Activated B cell treated with CpG ODN at 0.5 μM for 24 hours (primary cell): ENCODE measurements at regions of chr6 and their contacts with region 1.

Region 1: DNA sequence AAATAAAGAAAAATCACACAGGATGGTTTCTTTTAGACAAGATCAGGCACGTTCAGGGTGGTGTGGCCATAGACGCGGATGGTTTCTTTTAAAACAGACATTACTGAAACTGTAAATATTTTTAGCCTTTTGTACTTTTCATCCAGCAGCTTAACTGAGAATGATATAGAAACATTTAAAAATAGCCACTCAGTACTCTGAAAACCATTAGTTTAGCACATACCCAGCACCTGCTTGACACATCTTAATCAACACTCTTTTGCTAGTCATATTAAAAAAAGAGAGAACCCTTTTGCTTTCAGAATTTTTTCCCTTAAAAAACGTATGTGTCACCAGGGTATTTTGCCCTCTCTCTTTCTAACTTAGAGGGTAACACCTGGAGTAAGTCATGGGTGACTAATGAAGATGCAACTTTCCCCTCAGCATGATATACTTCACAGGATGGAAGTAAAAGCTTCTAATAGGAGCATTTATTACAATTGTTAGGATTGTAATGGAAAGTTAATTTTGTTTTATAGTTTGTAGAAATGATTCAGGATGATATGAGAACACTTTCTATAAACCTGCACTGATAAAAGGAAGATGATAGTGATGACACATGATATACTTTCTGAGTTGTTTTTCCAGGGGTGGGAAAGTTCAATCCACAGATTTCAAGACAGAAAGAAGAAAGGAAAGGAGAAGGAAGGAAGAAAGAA is 45.2 kb downstream of the BACH2 start:
- DNase-seq: no peak
- ATAC-seq: peak; percentile 51
- H3K4me3 Mint-ChIP-seq: peak overlapping the region; percentile 9
- H3K27ac Mint-ChIP-seq: peak overlapping the region; percentile 73
- H3K4me1 Mint-ChIP-seq: peaks cover 73% of the 10 kb centered on the region
- H3K27me3 Mint-ChIP-seq: no peaks in the 10 kb centered on the region
- CTCF ChIP-seq: no peak

Region 2: DNA sequence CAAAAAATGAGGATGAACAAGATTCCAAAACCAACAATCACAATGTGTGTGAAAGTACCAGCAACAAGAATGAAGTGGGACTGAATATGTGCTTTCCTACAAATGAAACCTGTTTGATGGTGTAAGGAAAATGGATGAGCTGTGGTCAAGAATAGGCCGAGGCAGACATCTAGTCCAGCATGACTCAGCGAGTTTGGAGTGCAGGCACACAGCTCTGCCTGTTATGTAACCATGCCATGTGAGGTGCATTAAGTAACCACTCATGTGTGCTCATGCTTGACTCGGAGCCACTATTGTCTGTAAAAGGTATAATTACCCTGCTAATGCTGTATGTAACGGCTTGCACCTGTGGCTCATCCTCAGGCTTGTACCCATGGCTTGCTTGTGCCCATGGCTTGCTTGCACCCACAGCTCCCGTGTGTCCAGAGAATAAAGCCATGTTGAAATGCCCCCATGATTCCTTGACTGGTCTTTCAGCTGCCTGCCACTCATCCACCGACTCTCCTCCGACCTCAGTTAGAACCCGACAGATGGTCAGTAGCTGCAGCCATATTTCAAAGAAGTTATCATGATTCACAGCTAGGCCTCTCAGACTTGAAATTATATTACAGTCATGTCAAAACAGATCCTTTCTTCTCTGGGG is 53.5 kb before region 1 on chr6:
- CTCF ChIA-PET with region 1: no interaction called
- POLR2A ChIA-PET with region 1: interaction called, 10 read pairs
- intact Hi-C with region 1: no loop called
- DNase-seq: no peak
- ATAC-seq: no peak
- H3K4me3 Mint-ChIP-seq: no peak overlapping the region
- H3K27ac Mint-ChIP-seq: peak overlapping the region; percentile 81
- H3K4me1 Mint-ChIP-seq: peaks cover 66% of the 10 kb centered on the region
- H3K27me3 Mint-ChIP-seq: no peaks in the 10 kb centered on the region
- CTCF ChIP-seq: no peak

Region 3: GRCh38 chr6:90233994-90234393 is 17.4 kb before region 1 on chr6:
- CTCF ChIA-PET with region 1: no interaction called
- POLR2A ChIA-PET with region 1: interaction called, 3 read pairs
- intact Hi-C with region 1: loop called (anchors 2 kb)
- DNase-seq: no peak
- ATAC-seq: peak; percentile 31
- H3K4me3 Mint-ChIP-seq: no peak overlapping the region
- H3K27ac Mint-ChIP-seq: peak overlapping the region; percentile 75
- H3K4me1 Mint-ChIP-seq: peaks cover 71% of the 10 kb centered on the region
- H3K27me3 Mint-ChIP-seq: no peaks in the 10 kb centered on the region
- CTCF ChIP-seq: no peak

Region 4: DNA sequence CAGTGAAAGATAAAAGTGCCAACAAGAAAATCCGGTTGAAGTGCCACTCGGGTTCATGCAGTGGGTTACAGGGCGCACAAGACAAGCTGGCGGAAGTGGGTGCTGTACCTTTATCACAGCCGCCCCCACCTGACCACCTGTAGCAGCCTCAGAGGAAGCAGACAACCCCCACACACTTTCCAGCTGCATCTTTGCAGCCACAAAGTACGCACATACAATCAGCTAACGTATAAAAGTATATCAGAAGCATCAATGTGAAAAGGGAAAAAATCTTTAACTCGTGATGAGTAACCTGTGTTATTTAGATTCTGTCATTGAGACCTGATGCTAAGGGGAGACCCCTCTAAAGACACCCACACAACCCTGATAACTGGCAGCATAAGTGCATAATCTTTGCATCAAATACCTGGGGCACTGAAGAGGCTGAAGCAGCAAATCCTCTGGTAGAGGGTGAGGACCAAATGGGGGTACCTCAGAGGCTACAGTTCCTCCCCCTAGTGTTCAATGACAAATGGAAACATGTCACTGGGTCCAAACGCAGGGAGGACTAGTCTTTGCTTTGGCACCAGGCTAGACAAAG is 23.1 kb after region 1 on chr6:
- CTCF ChIA-PET with region 1: no interaction called
- POLR2A ChIA-PET with region 1: interaction called, 6 read pairs
- intact Hi-C with region 1: loop called (anchors 1 kb)
- DNase-seq: peak; percentile 43
- ATAC-seq: peak; percentile 84
- H3K4me3 Mint-ChIP-seq: peak overlapping the region; percentile 64
- H3K27ac Mint-ChIP-seq: peak overlapping the region; percentile 85
- H3K4me1 Mint-ChIP-seq: peaks cover 93% of the 10 kb centered on the region
- H3K27me3 Mint-ChIP-seq: no peaks in the 10 kb centered on the region
- CTCF ChIP-seq: no peak